Posterior vena cava (tissue), 2 donors: ENCODE measurements at regions of chr11 and their contacts with region 1.

Region 1: GRCh38 chr11:124673333-124674167 is at the starts of genes SIAE and SPA17:
- DNase-seq: peak; percentile 98
- total RNA-seq, gene SIAE: 6.4 to 16.8 TPM
- total RNA-seq, gene SPA17: 3.4 to 4.0 TPM

Region 2: GRCh38 chr11:124865921-124866583 is 192.5 kb after region 1 on chr11:
- intact Hi-C with region 1: loop called in 1 of 2 experiments (anchors 10 kb)
- DNase-seq: no peak